ENCODE measurements at regions of chr21 and their contacts with region 1.

Region 1: DNA sequence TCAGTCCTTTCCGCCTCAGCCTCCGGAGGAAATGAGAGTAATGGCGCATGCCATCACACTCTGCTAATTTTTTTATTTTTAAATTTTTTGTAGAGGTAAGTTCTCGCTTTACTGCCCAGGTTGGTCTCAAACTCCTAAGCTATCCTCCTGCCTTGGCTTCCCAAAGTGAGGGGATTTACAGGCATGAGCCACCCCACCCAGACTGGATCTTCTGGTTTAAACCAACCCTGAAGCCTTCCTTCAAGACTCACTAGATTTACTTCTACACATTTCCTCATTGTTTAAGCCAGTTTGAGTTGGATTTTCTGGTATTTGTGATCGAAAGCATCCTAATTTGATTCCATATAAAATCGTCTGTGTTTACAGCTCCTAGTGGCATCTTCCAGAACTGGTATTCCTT is 23.1 kb upstream of the SCAF4 start:
- DNase-seq: no peak
- ATAC-seq: no peak
- H3K4me3 ChIP-seq: no peak overlapping the region
- H3K27ac ChIP-seq: no peak overlapping the region
- H3K4me1 ChIP-seq: no peaks in the 10 kb centered on the region
- H3K27me3 ChIP-seq: no peaks in the 10 kb centered on the region; the same call in 1 of the 2 replicates
- CTCF ChIP-seq: no peak
- POLR2A ChIP-seq: no peak
- RAD21 ChIP-seq: no peak

Region 2: DNA sequence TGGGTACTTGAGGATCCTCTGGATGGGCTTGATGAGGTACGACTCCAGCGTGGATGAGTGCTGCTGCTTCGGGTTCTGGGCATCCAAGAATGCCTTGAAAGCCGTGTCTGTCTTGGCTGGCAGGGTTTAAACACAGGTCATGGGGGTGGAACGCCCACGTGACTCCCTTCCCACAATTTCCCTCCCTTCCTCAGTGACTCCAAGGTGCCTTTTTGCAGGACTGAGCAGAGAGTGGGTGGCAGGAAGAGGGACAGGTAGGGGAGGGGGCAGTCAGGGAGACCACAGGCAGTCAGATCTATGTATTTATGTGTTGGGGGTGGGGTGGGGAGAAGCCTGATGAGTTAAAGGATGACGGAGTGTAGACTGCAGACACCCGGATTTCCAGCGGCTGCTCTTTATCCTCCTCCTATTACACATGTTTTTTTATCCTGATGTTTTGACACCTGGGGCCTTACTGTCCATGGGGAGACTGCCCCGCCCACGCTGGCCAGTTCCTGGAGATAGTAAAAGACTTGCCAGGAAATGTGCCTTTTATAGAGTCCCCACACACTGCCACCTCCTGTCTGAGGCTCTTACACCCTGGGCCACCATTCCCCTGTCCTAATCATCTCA is 613.5 kb before region 1 on chr21:
- CTCF ChIA-PET with region 1: no interaction called
- POLR2A ChIA-PET with region 1: interaction called, 45 read pairs
- dilution Hi-C with region 1: no loop called
- in situ Hi-C with region 1: no loop called
- intact Hi-C with region 1: no loop called
- DNase-seq: no peak
- ATAC-seq: no peak
- H3K4me3 ChIP-seq: no peak overlapping the region
- H3K27ac ChIP-seq: no peak overlapping the region
- H3K4me1 ChIP-seq: no peaks in the 10 kb centered on the region; the same call in 1 of the 2 replicates
- H3K27me3 ChIP-seq: no peaks in the 10 kb centered on the region
- CTCF ChIP-seq: no peak
- POLR2A ChIP-seq: no peak
- RAD21 ChIP-seq: no peak

Measured in IMR-90 (cell line).